AG04449 (cell line): ENCODE measurements at regions of chr19 and their contacts with region 1.

Region 1: GRCh38 chr19:43438291-43439096 is 23.8 kb downstream of the TEX101 start:
- DNase-seq: no peak
- H3K4me3 ChIP-seq: no peak overlapping the region
- CTCF ChIP-seq: no peak

Region 2: DNA sequence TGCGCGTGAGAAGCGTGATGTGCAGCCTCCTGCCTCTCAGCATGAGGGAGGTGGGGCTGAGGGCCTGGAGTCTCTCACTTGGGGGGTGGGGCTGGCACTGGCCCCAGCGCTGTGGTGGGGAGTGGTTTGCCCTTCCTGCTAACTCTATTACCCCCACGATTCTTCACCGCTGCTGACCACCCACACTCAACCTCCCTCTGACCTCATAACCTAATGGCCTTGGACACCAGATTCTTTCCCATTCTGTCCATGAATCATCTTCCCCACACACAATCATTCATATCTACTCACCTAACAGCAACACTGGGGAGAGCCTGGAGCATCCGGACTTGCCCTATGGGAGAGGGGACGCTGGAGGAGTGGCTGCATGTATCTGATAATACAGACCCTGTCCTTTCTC is 76.3 kb before region 1 on chr19:
- CTCF ChIA-PET with region 1: no interaction called
- POLR2A ChIA-PET with region 1: no interaction called
- DNase-seq: no peak
- H3K4me3 ChIP-seq: no peak overlapping the region
- CTCF ChIP-seq: no peak

Region 3: GRCh38 chr19:43425567-43426392 is 12.7 kb before region 1 on chr19:
- CTCF ChIA-PET with region 1: interaction called, 21 read pairs
- POLR2A ChIA-PET with region 1: interaction called, 3 read pairs
- DNase-seq: no peak
- H3K4me3 ChIP-seq: no peak overlapping the region
- CTCF ChIP-seq: peak; percentile 54